ENCODE measurements at regions of chr12 and their contacts with region 1.

Region 1: GRCh38 chr12:122123051-122123760 is 44.6 kb downstream of the MLXIP start:
- DNase-seq: peak; percentile 63
- ATAC-seq: peak; percentile 60

Region 2: GRCh38 chr12:121955258-121956235 is 167.7 kb before region 1 on chr12:
- intact Hi-C with region 1: no loop called
- DNase-seq: no peak
- ATAC-seq: peak; percentile 40

Region 3: GRCh38 chr12:122051231-122051876 is 71.9 kb before region 1 on chr12:
- intact Hi-C with region 1: loop called (anchors 5 kb)
- DNase-seq: peak; percentile 67
- ATAC-seq: peak; percentile 85